OCI-LY7 (cell line): ENCODE measurements at regions of chr2 and their contacts with region 1.

Region 1: DNA sequence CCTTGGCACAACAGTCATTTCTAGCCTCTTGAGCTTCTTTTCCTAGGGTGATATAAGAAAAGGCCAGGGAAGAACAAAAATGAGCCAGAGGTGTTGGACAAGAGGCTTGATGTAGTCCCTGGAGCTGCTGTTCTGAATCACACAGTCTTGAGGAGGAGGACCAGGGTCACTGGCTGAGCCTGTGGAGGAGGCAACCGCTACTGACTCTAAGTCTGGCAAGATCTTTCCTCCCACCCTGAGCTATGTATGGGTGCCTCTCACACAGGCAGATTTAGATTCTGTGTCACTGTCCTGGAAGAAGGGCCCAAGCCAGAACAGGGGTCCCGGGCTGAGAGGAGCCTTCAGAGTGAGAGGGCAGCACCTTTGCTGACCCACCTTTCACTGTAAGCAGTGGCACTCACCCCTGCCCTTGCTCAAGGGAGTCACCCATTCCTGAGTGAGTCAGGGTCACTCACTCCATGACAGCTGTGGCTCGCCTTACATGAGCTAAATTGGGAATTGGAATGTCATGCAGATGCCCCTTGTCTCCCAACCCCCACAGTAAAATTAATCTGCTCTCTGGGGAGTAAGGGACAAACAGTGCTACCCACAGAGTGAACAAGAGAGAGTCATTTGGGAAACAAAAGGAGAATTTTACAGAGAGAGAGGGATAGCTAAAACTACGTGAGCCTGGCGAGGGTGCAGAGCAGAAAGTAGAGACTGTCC is at the start of gene TRIM54:
- DNase-seq: no peak
- H3K4me3 ChIP-seq: no peak within 1 kb of the TSS
- H3K27ac ChIP-seq: no peak within 1 kb of the TSS
- H3K4me1 ChIP-seq: peaks cover 40% of the 10 kb centered on the region
- CTCF ChIP-seq: no peak
- total RNA-seq, gene TRIM54: 2.1 and 6.4 TPM in 2 replicates

Region 2: DNA sequence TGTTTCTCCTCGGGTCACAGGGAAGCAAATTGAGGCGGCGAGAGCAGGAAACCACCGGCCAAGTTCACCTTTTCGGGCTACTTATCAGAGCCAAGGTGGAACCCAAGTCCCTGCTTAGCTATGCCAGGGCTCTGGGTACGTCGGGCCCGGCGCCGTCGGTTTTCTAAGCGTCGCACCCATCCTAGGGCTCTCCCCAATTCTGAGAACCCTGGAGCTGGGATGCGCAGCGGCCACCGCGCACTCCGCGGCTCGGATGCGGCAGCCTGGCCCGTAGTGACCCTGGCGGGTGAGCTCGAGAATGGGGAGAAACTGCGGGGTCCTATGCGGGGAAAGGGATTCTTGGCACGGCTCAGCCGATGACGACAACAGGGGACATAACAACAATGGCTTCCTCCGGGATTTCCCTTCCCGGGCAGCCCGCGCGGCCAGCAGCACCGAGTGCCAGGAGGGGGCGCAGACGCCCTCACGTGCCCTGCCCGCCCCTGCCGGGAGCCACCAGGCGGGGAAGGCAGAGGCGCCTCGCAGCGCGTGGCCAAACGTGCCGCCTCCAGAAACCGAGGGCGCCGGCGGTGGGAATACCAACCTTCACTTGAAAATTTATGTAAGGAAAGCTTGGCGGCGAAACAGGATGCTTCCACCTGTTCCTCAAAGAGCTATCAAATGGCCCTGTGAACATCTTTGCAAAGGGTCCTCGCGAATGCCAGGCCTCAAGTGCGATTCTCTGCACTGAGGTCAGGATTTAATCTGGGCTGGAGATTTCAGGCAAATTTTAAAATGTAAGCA is 17.1 kb before region 1 on chr2:
- CTCF ChIA-PET with region 1: interaction called, 13 read pairs
- POLR2A ChIA-PET with region 1: interaction called, 5 read pairs
- intact Hi-C with region 1: loop called (anchors 1 kb)
- DNase-seq: peak; percentile 71
- H3K4me3 ChIP-seq: peak overlapping the region; percentile 90
- H3K27ac ChIP-seq: peak overlapping the region; percentile 23
- H3K4me1 ChIP-seq: peaks cover 54% of the 10 kb centered on the region
- CTCF ChIP-seq: peak; percentile 79

Region 3: GRCh38 chr2:27270670-27271069 is 11.3 kb before region 1 on chr2:
- CTCF ChIA-PET with region 1: interaction called, 13 read pairs
- POLR2A ChIA-PET with region 1: interaction called, 10 read pairs
- intact Hi-C with region 1: loop called (anchors 1 kb)
- DNase-seq: peak; percentile 43
- H3K4me3 ChIP-seq: no peak overlapping the region
- H3K27ac ChIP-seq: no peak overlapping the region
- H3K4me1 ChIP-seq: peaks cover 42% of the 10 kb centered on the region
- CTCF ChIP-seq: no peak